ENCODE measurements at regions of chrX and their contacts with region 1.

Region 1: GRCh38 chrX:138026211-138026610 is 460.3 kb downstream of the ZIC3 start:
- DNase-seq: peak in 2 of 3 donors; percentile 15
- H3K4me3 ChIP-seq: no peak overlapping the region
- H3K27ac ChIP-seq: no peak overlapping the region
- H3K4me1 ChIP-seq: no peaks in the 10 kb centered on the region
- H3K27me3 ChIP-seq: no peaks in the 10 kb centered on the region

Region 2: DNA sequence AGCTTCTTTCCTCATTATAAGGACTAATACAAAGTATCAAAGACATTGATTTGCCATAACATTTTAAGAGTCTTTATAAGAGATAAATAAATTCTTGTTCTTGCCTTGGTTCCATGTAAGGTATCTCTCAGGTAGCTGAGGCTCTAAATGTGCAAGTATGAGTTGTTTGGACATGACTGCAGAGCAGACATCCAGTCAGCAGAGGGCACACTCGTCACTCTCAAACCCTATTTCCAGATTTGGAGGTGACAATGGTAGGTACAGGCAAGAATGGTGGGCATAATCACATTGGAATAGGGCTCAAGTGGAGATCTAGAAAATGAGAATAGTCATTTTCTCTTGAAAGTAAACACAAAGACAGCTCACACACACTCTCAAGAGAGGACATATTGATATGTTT is 593.6 kb before region 1 on chrX:
- CTCF ChIA-PET with region 1: interaction called, 12 read pairs
- POLR2A ChIA-PET with region 1: no interaction called
- DNase-seq: peak in 2 of 3 donors; percentile 54 to 58
- H3K4me3 ChIP-seq: no peak overlapping the region
- H3K27ac ChIP-seq: no peak overlapping the region
- H3K4me1 ChIP-seq: peaks cover 0 to 18% (median 5%) of the 10 kb centered on the region in 4 experiments
- H3K27me3 ChIP-seq: peaks cover 2 to 36% (median 14%) of the 10 kb centered on the region in 5 experiments

Region 3: DNA sequence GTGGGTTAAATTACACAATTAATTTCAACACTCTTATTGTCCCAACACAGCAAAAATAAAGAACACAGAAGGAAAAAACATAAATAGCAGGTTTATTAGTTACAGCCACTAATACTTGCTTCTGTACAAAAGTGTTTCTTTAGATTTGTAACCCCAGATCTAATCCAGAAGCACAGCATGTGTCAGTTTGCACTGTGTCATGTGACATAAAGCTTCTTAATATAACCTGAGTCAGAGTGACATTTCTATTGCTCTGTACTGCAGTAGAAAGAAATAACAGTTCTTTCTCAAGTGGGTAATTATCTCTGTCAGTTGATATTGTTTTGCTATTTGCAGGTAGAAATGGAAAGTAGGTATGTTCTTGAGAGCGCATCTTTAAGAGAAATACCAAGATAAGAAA is 37.8 kb before region 1 on chrX:
- CTCF ChIA-PET with region 1: no interaction called
- POLR2A ChIA-PET with region 1: no interaction called
- DNase-seq: no peak
- H3K4me3 ChIP-seq: no peak overlapping the region
- H3K27ac ChIP-seq: no peak overlapping the region
- H3K4me1 ChIP-seq: no peaks in the 10 kb centered on the region
- H3K27me3 ChIP-seq: peaks cover 0 to 3% (median 0%) of the 10 kb centered on the region in 5 experiments

Measured in common myeloid progenitor, CD34-positive (primary cell).